B cell (primary cell): ENCODE measurements at regions of chr1 and their contacts with region 1.

Region 1: GRCh38 chr1:88180449-88181108 is 503.5 kb upstream of the PKN2 start:
- DNase-seq: peak; percentile 81
- ATAC-seq: peak; percentile 99
- H3K4me3 ChIP-seq: no peak overlapping the region
- H3K4me3 Mint-ChIP-seq: no peak overlapping the region
- H3K27ac ChIP-seq: no peak overlapping the region
- H3K27ac Mint-ChIP-seq: no peak overlapping the region
- H3K4me1 ChIP-seq: peaks cover 0 to 3% of the 10 kb centered on the region in 2 donors
- H3K4me1 Mint-ChIP-seq: peaks cover 5% of the 10 kb centered on the region
- H3K27me3 ChIP-seq: no peaks in the 10 kb centered on the region
- H3K27me3 Mint-ChIP-seq: peaks cover 20% of the 10 kb centered on the region
- CTCF ChIP-seq: peak; percentile 98

Region 2: GRCh38 chr1:87108814-87109411 is 1071.7 kb before region 1 on chr1:
- CTCF ChIA-PET with region 1: no interaction called
- POLR2A ChIA-PET with region 1: no interaction called
- intact Hi-C with region 1: no loop called
- DNase-seq: no peak
- ATAC-seq: no peak
- H3K4me3 ChIP-seq: no peak overlapping the region
- H3K4me3 Mint-ChIP-seq: no peak overlapping the region
- H3K27ac ChIP-seq: no peak overlapping the region
- H3K27ac Mint-ChIP-seq: no peak overlapping the region
- H3K4me1 ChIP-seq: peaks cover 0 to 3% of the 10 kb centered on the region in 2 donors
- H3K4me1 Mint-ChIP-seq: peaks cover 16% of the 10 kb centered on the region
- H3K27me3 ChIP-seq: no peaks in the 10 kb centered on the region
- H3K27me3 Mint-ChIP-seq: no peaks in the 10 kb centered on the region
- CTCF ChIP-seq: no peak

Region 3: DNA sequence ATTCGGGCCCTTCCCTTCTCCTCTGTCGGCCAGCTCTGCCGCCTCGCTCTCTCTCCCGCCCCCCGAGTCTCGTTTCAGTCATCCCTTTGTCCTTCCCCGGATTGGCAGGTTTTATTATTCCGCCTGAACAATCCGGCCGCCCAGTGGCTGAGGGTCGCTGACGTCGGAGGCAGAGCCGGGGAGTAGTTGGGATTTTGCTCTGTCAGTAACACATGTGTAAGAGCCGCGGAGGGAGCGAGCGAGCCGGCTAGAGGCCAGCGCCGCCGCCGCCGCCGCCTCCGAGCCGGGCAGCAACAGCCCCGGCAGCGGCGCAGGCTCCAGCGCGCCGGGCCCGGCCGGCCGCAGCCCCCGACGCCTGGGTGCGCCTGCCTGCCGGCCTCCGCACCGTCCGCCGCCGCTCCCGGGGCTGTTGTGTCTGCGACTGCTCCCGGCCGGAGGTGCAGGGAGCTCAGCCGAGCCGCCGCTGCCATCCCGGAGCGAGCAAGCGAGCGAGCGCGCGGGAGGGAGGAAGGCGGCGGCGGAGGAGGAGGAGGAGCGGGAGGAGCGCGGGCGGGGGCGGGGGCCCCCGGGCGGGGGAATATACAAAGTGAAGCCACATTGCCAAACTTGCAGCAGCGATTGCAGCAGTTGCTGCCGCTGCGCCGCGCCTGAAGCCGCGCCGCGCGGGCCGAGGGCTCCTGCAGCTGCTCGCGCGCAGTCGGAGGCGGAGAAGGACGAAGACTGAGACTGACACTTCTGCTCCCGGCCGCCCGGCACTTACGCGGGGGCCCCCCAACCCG is 852.1 kb before region 1 on chr1 and contains the start of gene LMO4:
- CTCF ChIA-PET with region 1: interaction called, 4 read pairs
- POLR2A ChIA-PET with region 1: no interaction called
- intact Hi-C with region 1: loop called (anchors 10 kb)
- DNase-seq: peak; percentile 95
- ATAC-seq: peak; percentile 75
- H3K4me3 ChIP-seq: peak within 1 kb of the TSS; percentile 71 to 93 (median 76)
- H3K4me3 Mint-ChIP-seq: peak within 1 kb of the TSS; percentile 92
- H3K27ac ChIP-seq: peak within 1 kb of the TSS; percentile 80 to 89
- H3K27ac Mint-ChIP-seq: peak within 1 kb of the TSS; percentile 99
- H3K4me1 ChIP-seq: peaks cover 33 to 34% of the 10 kb centered on the region in 2 donors
- H3K4me1 Mint-ChIP-seq: peaks cover 54% of the 10 kb centered on the region
- H3K27me3 ChIP-seq: no peaks in the 10 kb centered on the region
- H3K27me3 Mint-ChIP-seq: no peaks in the 10 kb centered on the region
- CTCF ChIP-seq: no peak
- total RNA-seq, gene LMO4: 35.7 and 40.1 TPM in 2 replicates

Region 4: GRCh38 chr1:88191917-88192316 is 11.3 kb after region 1 on chr1:
- CTCF ChIA-PET with region 1: interaction called, 49 read pairs
- POLR2A ChIA-PET with region 1: interaction called, 4 read pairs
- intact Hi-C with region 1: no loop called
- DNase-seq: peak; percentile 72
- ATAC-seq: peak; percentile 82
- H3K4me3 ChIP-seq: peak overlapping the region in 1 of 5 experiments; percentile 35
- H3K4me3 Mint-ChIP-seq: peak overlapping the region; percentile 42
- H3K27ac ChIP-seq: peak overlapping the region; percentile 70 to 87
- H3K27ac Mint-ChIP-seq: peak overlapping the region; percentile 93
- H3K4me1 ChIP-seq: peaks cover 33 to 47% of the 10 kb centered on the region in 2 donors
- H3K4me1 Mint-ChIP-seq: peaks cover 45% of the 10 kb centered on the region
- H3K27me3 ChIP-seq: no peaks in the 10 kb centered on the region
- H3K27me3 Mint-ChIP-seq: no peaks in the 10 kb centered on the region
- CTCF ChIP-seq: no peak

Region 5: DNA sequence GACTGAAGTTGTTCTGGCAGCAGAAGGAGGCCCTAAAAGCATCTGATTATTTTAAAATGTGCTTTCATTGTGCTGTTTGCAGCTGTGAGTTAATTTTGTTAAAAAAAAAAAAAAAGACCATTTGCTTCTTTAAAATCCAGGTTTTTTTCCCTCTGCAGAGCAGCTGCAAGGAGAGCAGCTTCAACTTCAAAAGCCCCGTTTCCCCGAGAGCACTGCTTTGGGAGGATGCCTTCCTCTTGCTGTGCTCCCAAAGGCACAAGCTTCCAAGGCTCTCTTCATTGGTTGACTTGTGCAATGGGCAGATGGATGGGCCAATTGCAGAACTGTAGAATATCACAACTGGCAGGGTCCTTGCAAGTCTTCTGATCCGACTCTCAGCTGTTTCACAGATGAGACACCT is 44.3 kb after region 1 on chr1:
- CTCF ChIA-PET with region 1: interaction called, 19 read pairs
- POLR2A ChIA-PET with region 1: no interaction called
- intact Hi-C with region 1: loop called (anchors 1 kb)
- DNase-seq: no peak
- ATAC-seq: no peak
- H3K4me3 ChIP-seq: no peak overlapping the region
- H3K4me3 Mint-ChIP-seq: no peak overlapping the region
- H3K27ac ChIP-seq: no peak overlapping the region
- H3K27ac Mint-ChIP-seq: no peak overlapping the region
- H3K4me1 ChIP-seq: no peaks in the 10 kb centered on the region
- H3K4me1 Mint-ChIP-seq: no peaks in the 10 kb centered on the region
- H3K27me3 ChIP-seq: no peaks in the 10 kb centered on the region
- H3K27me3 Mint-ChIP-seq: no peaks in the 10 kb centered on the region
- CTCF ChIP-seq: no peak

Region 6: DNA sequence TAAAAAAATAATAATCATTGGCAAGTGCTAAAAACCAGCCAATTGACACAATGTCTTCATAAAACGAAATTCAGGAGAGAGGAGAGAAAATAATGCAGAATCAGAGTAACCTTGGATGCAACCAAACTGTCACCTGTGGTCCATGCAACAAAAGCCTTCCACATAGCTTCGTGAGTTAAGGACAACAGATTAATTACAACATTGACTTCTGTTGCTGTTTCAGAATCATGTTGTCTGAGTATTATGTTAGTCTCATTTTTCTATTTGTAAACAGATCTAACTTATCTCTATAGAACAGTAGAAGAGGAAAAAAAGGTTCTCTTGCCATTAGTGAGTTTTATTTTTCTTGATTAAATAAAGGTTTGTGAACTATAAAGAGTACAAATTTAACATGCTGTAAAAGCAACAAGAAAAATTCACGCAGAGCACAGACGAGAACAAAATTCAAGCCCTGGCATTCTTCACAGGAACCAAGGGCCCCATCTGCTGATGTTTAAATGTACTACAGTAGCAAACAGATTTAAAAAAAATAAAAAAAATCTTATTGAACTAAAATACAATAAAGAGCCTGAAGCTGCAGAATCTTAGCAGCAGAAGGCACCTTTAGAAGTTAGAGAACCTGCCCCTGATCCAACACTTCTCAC is 122.4 kb after region 1 on chr1:
- CTCF ChIA-PET with region 1: interaction called, 28 read pairs
- POLR2A ChIA-PET with region 1: no interaction called
- intact Hi-C with region 1: loop called (anchors 1 kb)
- DNase-seq: peak; percentile 37
- ATAC-seq: no peak
- H3K4me3 ChIP-seq: no peak overlapping the region
- H3K4me3 Mint-ChIP-seq: no peak overlapping the region
- H3K27ac ChIP-seq: no peak overlapping the region
- H3K27ac Mint-ChIP-seq: no peak overlapping the region
- H3K4me1 ChIP-seq: no peaks in the 10 kb centered on the region
- H3K4me1 Mint-ChIP-seq: no peaks in the 10 kb centered on the region
- H3K27me3 ChIP-seq: peaks cover 0 to 2% (median 0%) of the 10 kb centered on the region in 4 experiments
- H3K27me3 Mint-ChIP-seq: peaks cover 11% of the 10 kb centered on the region
- CTCF ChIP-seq: peak; percentile 72